ENCODE measurements at regions of chr9 and their contacts with region 1.

Region 1: DNA sequence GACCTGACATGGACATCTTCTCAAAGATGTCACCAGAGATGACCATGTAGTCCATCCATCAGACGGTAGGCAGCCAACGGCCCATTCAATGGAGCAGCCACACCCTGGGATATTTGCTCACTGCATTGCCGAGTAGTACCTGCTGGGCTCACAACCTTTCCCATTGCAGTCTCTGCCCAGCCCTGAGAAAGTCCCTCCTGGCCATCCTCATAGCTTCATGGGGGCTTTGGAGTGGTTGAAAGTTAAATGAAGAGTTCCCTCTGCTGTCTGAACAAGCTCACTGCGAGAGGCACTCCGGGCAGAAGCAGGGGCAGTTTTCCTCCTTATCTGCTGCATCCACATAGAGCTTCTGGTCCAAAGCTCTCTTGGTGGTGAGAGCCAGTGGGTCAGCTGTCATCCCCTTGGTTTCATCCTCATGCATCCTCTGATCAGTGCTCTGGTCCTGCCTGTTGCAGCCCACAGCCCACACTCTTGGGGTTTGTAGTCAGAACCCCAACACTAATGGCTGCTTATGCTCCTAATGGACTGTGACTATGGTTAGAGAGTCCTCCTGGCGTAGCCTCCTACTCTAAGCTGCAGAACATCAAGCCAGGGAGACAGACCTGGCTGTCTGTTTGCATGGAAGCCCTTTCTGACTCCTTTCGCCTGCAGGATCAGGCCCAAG is 23.4 kb downstream of the TNFSF8 start:
- DNase-seq: peak; percentile 78
- H3K4me3 ChIP-seq: no peak overlapping the region
- H3K27ac ChIP-seq: no peak overlapping the region
- H3K4me1 ChIP-seq: peaks cover 12% of the 10 kb centered on the region
- H3K27me3 ChIP-seq: no peaks in the 10 kb centered on the region
- CTCF ChIP-seq: peak; percentile 80 to 85
- POLR2A ChIP-seq: no peak

Region 2: DNA sequence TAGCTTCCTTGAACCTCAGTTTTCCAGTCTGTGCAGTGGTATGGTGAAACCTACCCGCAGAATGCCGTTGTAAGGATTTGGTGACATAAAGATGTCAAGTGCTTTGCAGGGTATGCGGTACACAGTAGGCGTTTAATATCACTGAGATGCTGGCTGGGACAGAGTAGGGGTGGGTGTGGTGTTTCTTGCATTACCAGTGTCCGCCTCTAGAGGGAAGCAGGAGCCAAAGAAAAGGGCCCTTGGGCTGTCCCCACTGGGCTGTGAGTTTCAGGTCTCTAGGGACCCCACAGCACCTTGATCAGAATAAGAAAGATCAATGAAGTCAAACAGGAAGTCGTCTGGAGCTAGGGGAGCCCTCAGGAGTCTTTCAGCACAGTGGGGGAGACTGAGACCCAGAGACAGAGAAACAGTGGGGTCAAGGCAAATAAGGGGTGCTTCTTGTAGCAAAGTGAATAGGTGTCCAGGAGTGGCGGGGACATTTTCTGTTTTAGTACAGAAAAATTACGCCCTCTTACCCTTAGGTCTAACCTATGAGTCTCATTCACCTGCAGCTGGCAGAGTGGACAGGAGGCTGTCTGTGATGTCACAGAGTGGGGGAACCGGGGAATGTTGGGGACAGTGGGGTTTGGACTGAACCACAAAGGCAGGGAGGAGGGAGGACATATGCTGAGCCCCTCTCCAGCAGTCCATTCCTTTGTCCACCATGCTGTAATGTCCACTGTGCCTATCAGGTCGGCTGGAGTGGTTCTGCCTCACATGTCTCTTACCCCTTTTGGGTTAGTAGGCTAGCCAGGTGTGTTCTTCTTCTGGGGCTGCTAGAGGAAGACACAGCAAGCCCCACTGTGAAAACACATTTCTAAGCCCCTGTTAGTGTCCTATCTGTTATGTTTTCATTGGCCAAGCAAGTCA is 244.7 kb before region 1 on chr9:
- CTCF ChIA-PET with region 1: interaction called, 16 read pairs
- POLR2A ChIA-PET with region 1: no interaction called
- dilution Hi-C with region 1: no loop called
- intact Hi-C with region 1: loop called (anchors 1 kb)
- DNase-seq: peak; percentile 50
- H3K4me3 ChIP-seq: no peak overlapping the region
- H3K27ac ChIP-seq: no peak overlapping the region
- H3K4me1 ChIP-seq: no peaks in the 10 kb centered on the region
- H3K27me3 ChIP-seq: peaks cover 5 to 9% of the 10 kb centered on the region in 2 experiments
- CTCF ChIP-seq: peak; percentile 79 to 80
- POLR2A ChIP-seq: no peak

Region 3: GRCh38 chr9:114691046-114691955 is 215.7 kb before region 1 on chr9:
- CTCF ChIA-PET with region 1: interaction called, 15 read pairs
- POLR2A ChIA-PET with region 1: no interaction called
- dilution Hi-C with region 1: no loop called
- intact Hi-C with region 1: no loop called
- DNase-seq: peak; percentile 23
- H3K4me3 ChIP-seq: no peak overlapping the region
- H3K27ac ChIP-seq: no peak overlapping the region
- H3K4me1 ChIP-seq: peaks cover 12% of the 10 kb centered on the region
- H3K27me3 ChIP-seq: no peaks in the 10 kb centered on the region
- CTCF ChIP-seq: no peak
- POLR2A ChIP-seq: no peak

Region 4: DNA sequence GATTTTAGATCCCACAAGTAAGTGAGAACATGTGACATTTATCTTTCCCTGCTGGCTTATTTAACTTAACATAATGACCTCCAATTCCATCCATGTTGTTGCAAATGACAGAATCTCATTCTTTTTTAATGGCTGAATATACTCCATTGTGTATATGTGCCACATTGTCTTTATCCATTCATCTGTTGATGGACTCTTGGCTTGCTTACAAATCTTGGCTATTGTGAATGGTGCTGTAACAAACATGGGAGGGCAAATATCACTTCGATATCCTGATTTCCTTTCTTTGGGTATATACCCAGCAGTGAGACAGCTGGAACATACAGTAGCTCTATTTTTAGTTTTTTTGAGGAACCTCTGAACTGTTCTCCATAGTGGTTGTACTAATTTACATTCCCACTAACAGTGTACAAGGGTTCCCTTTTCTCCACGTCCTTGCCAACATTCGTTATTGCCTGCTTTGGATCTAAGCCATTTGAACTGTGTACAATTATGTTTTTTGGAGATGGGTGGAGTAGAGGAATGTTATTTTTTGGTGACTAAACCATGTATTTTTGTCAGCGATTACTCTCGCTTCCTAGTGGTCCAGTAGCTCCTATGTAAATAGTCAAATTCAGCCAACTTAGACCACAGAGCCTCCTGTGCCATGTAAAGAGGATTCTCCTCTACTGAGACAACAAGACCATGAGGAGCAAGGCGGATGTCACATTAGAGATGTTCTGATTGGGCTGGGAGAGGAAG is 161.8 kb before region 1 on chr9:
- CTCF ChIA-PET with region 1: interaction called, 301 read pairs
- POLR2A ChIA-PET with region 1: no interaction called
- dilution Hi-C with region 1: no loop called
- intact Hi-C with region 1: no loop called
- DNase-seq: peak; percentile 68
- H3K4me3 ChIP-seq: no peak overlapping the region
- H3K27ac ChIP-seq: peak overlapping the region; percentile 12
- H3K4me1 ChIP-seq: peaks cover 9% of the 10 kb centered on the region
- H3K27me3 ChIP-seq: no peaks in the 10 kb centered on the region
- CTCF ChIP-seq: no peak
- POLR2A ChIP-seq: no peak

Region 5: GRCh38 chr9:114805670-114806525 is 101.1 kb before region 1 on chr9 and contains the start of gene TNFSF15:
- CTCF ChIA-PET with region 1: interaction called, 33 read pairs
- POLR2A ChIA-PET with region 1: interaction called, 7 read pairs
- dilution Hi-C with region 1: no loop called
- intact Hi-C with region 1: loop called (anchors 1 kb)
- DNase-seq: peak; percentile 68
- H3K4me3 ChIP-seq: peak within 1 kb of the TSS; percentile 28 to 57 (median 33)
- H3K27ac ChIP-seq: peak within 1 kb of the TSS; percentile 64
- H3K4me1 ChIP-seq: peaks cover 38% of the 10 kb centered on the region
- H3K27me3 ChIP-seq: no peaks in the 10 kb centered on the region
- CTCF ChIP-seq: no peak
- POLR2A ChIP-seq: peak; percentile 54
- total RNA-seq, gene TNFSF15: 13.6 and 14.3 TPM in 2 replicates

Region 6: DNA sequence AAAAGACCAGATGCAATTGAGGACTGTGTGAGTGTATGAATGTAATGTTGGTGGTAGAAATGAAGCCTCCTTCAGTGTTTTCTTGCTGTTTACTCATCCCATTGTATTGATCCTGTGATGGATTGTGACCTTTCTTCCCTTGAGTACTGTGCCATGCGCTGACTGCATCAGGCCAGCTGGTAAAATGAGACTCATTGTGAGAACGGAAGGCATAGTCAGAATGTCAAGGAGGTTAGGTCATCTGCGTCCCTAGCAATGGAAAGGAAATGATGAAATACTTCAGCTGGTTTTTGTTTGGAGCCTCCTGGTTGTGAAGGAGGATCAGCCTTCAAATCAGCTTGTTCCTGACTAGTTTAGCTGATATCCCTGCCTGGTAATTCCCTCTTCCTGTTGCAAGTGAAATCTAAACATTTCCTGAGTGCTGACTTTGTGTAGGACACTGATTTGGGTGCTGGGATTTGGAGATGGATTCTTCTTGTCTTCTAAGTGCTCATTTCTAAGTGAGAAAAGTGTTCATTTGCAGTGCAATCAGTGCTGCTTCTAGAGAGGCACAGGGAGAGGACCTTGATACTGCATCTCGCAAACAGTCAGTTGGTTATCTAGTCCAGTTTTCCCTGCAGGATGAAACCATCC is 12.1 kb before region 1 on chr9:
- CTCF ChIA-PET with region 1: interaction called, 81 read pairs
- POLR2A ChIA-PET with region 1: interaction called, 3 read pairs
- dilution Hi-C with region 1: no loop called
- intact Hi-C with region 1: no loop called
- DNase-seq: peak; percentile 99
- H3K4me3 ChIP-seq: peak overlapping the region in 1 of 3 experiments; percentile 16
- H3K27ac ChIP-seq: peak overlapping the region; percentile 100
- H3K4me1 ChIP-seq: peaks cover 63% of the 10 kb centered on the region
- H3K27me3 ChIP-seq: no peaks in the 10 kb centered on the region
- CTCF ChIP-seq: no peak
- POLR2A ChIP-seq: peak; percentile 62

Measured in endothelial cell of umbilical vein (primary cell).